ENCODE measurements at regions of chr1 and their contacts with region 1.

Region 1: DNA sequence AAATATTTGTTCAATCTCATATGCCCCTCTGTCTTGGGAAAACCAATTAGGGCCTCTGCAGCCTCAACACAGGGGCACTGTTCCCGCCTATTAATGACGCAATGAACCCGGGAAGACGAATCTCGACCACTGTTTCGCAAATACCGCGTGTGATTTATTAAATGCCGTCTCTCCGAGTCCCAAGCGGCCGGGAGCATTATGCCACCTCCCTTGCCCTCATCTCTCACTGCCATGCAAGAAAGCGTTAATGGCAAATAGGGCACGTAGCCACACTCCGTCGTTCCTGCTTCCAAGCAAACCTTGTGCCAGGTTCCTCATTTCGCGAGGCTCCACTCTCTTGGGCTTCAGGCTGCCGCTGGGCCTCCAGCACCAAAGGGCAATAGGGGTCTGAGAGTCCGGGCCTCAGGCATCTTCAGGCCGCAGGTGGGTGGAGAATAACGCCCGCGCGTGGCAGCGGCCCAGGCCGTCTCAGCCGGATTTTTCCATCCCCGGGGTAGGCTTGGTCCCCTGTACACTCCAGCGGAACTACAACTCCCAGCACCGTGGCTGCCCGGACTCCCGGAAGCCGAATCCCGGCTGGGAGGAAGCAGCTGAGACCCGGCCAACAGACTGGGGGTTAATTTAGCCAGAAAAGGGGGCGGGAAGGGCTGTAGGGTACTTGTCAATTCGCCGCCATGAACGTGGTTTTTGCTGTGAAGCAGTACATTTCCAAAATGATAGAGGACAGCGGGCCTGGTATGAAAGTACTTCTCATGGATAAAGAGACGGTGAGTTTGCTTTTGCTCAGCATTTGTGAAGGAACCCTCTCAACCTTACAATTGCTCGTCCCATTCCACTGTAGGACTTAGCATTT is at the start of gene VPS45:
- DNase-seq: peak; percentile 46 to 89 (median 80)
- ATAC-seq: peak; percentile 90
- H3K4me3 ChIP-seq: peak within 1 kb of the TSS; percentile 72 to 79
- H3K4me3 Mint-ChIP-seq: peak within 1 kb of the TSS; percentile 94
- H3K27ac ChIP-seq: peak within 1 kb of the TSS; percentile 57 to 78
- H3K27ac Mint-ChIP-seq: peak within 1 kb of the TSS; percentile 94
- H3K4me1 ChIP-seq: peaks cover 9% of the 10 kb centered on the region
- H3K4me1 Mint-ChIP-seq: peaks cover 36% of the 10 kb centered on the region
- H3K27me3 ChIP-seq: no peaks in the 10 kb centered on the region
- H3K27me3 Mint-ChIP-seq: no peaks in the 10 kb centered on the region
- CTCF ChIP-seq: no peak
- total RNA-seq, gene VPS45: 5.9 to 6.9 TPM

Region 2: DNA sequence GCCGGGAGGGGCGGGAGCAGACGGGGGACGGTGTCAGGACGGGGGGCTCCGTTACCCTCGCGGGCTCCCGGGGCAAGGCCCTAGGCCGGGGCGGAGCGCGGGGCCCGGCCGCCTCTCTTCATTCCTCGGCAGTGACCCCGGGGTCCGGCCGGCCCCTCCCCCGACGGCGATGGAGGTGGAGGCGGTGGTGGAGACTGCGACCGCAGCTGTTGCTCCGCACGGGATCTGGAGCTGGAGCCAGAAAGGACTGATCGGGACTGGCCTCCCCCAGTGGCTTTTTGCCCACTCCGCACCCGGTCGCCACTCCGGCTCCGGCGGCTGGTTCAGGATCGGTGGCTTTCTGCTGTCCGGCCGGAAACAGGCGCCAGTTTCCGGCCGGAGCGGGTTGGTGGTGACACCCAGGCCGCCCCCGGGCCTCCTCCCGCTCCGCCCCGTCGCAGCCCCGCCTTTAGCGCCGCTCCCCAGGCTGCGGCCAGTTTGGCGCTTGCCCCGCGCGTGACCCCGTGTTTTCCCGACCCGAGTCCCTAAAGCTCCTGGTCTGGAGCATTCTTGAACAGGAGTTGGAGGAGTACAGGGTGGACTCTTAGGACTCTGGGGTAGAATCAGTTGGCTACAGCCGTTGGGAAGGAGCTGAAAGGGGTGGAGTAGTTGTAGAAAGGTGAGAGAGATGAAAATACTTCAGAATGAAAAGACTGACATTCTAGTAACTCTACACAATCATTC is 56.9 kb before region 1 on chr1 and contains the start of gene OTUD7B:
- CTCF ChIA-PET with region 1: interaction called, 3 read pairs
- POLR2A ChIA-PET with region 1: interaction called, 6 read pairs
- intact Hi-C with region 1: loop called in 1 of 2 experiments (anchors 5 kb)
- DNase-seq: peak; percentile 42 to 82 (median 65)
- ATAC-seq: peak; percentile 82
- H3K4me3 ChIP-seq: peak within 1 kb of the TSS; percentile 88 to 95
- H3K4me3 Mint-ChIP-seq: peak within 1 kb of the TSS; percentile 88
- H3K27ac ChIP-seq: peak within 1 kb of the TSS; percentile 59 to 67
- H3K27ac Mint-ChIP-seq: peak within 1 kb of the TSS; percentile 91
- H3K4me1 ChIP-seq: peaks cover 10% of the 10 kb centered on the region
- H3K4me1 Mint-ChIP-seq: peaks cover 29% of the 10 kb centered on the region
- H3K27me3 ChIP-seq: no peaks in the 10 kb centered on the region
- H3K27me3 Mint-ChIP-seq: no peaks in the 10 kb centered on the region
- CTCF ChIP-seq: no peak
- total RNA-seq, gene OTUD7B: 2.1 to 2.2 TPM

Region 3: GRCh38 chr1:150082494-150082893 is 15.1 kb after region 1 on chr1:
- CTCF ChIA-PET with region 1: interaction called, 4 read pairs
- POLR2A ChIA-PET with region 1: no interaction called
- intact Hi-C with region 1: loop called in 1 of 2 experiments (anchors 1 kb)
- DNase-seq: no peak
- ATAC-seq: no peak
- H3K4me3 ChIP-seq: no peak overlapping the region
- H3K4me3 Mint-ChIP-seq: no peak overlapping the region
- H3K27ac ChIP-seq: no peak overlapping the region
- H3K27ac Mint-ChIP-seq: no peak overlapping the region
- H3K4me1 ChIP-seq: no peaks in the 10 kb centered on the region
- H3K4me1 Mint-ChIP-seq: peaks cover 2% of the 10 kb centered on the region
- H3K27me3 ChIP-seq: no peaks in the 10 kb centered on the region
- H3K27me3 Mint-ChIP-seq: no peaks in the 10 kb centered on the region
- CTCF ChIP-seq: no peak

Region 4: DNA sequence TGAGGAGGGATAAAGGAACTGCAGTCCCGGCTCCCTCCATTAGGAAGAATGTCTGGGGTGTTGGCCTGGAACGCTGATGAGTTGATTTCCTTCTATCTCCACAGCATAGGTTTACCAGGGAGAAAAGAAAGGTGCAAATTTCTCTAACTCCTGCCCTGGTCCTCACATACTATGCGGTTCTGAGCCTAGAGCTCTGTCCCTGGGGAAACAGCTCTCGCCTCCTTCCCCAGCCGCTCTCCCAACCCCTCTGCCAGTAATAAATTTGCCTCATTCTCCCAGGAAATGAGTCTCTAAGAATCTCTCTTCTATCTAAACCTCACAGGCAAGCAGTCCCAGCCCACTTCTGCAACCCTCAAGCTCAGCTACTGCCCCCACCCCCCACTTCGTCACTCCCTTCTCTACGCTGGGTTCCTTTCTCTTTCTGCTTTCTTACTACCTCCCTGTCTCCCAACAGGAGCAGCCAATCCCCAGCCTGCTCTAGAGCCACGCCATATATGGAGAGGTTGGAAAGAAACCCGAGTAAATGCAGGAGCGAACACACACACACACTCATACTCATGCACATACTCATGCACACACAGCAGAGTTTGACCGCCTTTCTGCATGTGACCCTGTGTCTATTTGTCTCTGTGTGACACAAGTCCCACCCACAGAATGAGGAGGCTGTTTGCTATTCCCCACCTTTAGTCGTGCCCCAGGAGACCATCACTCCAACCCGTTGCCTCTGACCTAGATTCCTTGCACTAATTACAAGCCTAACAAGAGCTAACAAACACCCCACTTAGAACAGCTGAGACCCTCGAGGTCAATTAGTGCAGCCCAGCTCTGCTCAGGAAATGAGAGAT is 95.7 kb after region 1 on chr1:
- CTCF ChIA-PET with region 1: interaction called, 332 read pairs
- POLR2A ChIA-PET with region 1: interaction called, 3 read pairs
- intact Hi-C with region 1: no loop called
- DNase-seq: peak in 1 of 9 experiments; percentile 46
- ATAC-seq: peak; percentile 45
- H3K4me3 ChIP-seq: no peak overlapping the region
- H3K4me3 Mint-ChIP-seq: peak overlapping the region; percentile 6
- H3K27ac ChIP-seq: no peak overlapping the region
- H3K27ac Mint-ChIP-seq: peak overlapping the region; percentile 10
- H3K4me1 ChIP-seq: peaks cover 46% of the 10 kb centered on the region
- H3K4me1 Mint-ChIP-seq: peaks cover 43% of the 10 kb centered on the region
- H3K27me3 ChIP-seq: no peaks in the 10 kb centered on the region
- H3K27me3 Mint-ChIP-seq: no peaks in the 10 kb centered on the region
- CTCF ChIP-seq: no peak

Region 5: DNA sequence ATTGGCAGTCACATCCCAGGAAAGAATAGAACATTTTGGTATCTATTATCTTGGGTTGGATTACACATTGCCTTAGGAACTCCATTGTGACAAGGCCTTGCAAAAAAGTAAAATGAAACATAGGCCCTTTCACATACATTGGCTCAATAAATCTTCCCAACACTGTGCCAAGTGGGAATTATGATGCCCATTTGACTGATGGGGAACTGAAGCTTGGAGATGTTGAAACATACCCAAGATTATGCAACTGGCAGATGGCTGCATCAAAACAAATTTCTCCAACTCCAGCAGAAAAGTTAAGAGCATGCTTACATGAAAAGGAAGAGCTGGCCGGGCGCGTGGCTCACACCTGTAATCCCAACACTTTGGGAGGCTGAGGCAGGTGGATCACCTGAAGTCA is 109.2 kb after region 1 on chr1:
- CTCF ChIA-PET with region 1: interaction called, 10 read pairs
- POLR2A ChIA-PET with region 1: no interaction called
- intact Hi-C with region 1: no loop called
- DNase-seq: no peak
- ATAC-seq: no peak
- H3K4me3 ChIP-seq: no peak overlapping the region
- H3K4me3 Mint-ChIP-seq: no peak overlapping the region
- H3K27ac ChIP-seq: no peak overlapping the region
- H3K27ac Mint-ChIP-seq: no peak overlapping the region
- H3K4me1 ChIP-seq: no peaks in the 10 kb centered on the region
- H3K4me1 Mint-ChIP-seq: no peaks in the 10 kb centered on the region
- H3K27me3 ChIP-seq: no peaks in the 10 kb centered on the region
- H3K27me3 Mint-ChIP-seq: no peaks in the 10 kb centered on the region
- CTCF ChIP-seq: no peak

Region 6: DNA sequence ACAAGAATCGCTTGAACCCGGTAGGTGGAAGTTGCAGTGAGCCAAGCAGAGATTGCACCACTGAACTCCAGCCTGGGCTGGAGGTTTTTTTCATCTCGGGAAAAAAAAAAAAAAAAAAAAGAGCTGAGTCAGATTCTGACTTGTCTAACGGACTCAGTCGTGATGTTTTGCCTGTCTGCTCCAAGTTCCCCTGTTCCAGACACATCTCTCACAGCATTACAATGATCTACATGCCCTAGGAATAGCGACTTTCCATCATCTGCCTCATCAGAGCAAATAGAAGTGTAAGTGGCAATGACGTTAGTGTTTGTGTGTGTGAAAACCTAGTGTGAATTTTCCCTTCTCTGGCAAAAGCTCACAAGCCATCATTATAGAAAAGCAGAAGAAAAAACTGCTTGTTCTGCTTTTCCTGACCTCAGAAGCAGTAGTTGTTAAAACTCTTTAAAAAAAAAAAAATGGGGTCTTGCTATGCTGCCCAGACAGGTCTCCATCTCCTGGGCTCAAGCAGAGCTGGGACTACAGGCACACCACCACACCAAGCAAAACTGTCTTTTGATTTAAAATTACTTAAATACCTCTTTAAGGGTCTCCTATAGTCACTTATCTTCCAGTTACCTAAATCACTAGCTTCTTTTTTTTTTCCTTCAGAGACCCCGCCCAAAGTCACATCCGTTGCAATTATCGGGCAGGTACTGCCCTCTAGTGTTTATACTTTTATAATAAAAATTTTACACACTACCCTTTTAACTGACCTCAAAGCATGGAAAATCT is 119.6 kb after region 1 on chr1:
- CTCF ChIA-PET with region 1: interaction called, 78 read pairs
- POLR2A ChIA-PET with region 1: no interaction called
- intact Hi-C with region 1: no loop called
- DNase-seq: peak in 5 of 9 experiments; percentile 5 to 85 (median 12)
- ATAC-seq: peak; percentile 78
- H3K4me3 ChIP-seq: no peak overlapping the region
- H3K4me3 Mint-ChIP-seq: peak overlapping the region; percentile 32
- H3K27ac ChIP-seq: peak overlapping the region in 1 of 2 experiments; percentile 33
- H3K27ac Mint-ChIP-seq: no peak overlapping the region
- H3K4me1 ChIP-seq: peaks cover 5% of the 10 kb centered on the region
- H3K4me1 Mint-ChIP-seq: peaks cover 7% of the 10 kb centered on the region
- H3K27me3 ChIP-seq: no peaks in the 10 kb centered on the region
- H3K27me3 Mint-ChIP-seq: no peaks in the 10 kb centered on the region
- CTCF ChIP-seq: peak; percentile 91